OCI-LY7 (cell line): ENCODE measurements at regions of chr1 and their contacts with region 1.

Region 1: GRCh38 chr1:51000160-51000559 is 30.1 kb downstream of the CDKN2C start:
- DNase-seq: peak; percentile 85
- H3K4me3 ChIP-seq: peak overlapping the region; percentile 53
- H3K27ac ChIP-seq: peak overlapping the region; percentile 90
- H3K4me1 ChIP-seq: peaks cover 32% of the 10 kb centered on the region
- CTCF ChIP-seq: no peak

Region 2: GRCh38 chr1:50405814-50406213 is 594.3 kb before region 1 on chr1:
- CTCF ChIA-PET with region 1: no interaction called
- POLR2A ChIA-PET with region 1: no interaction called
- intact Hi-C with region 1: no loop called
- DNase-seq: no peak
- H3K4me3 ChIP-seq: no peak overlapping the region
- H3K27ac ChIP-seq: no peak overlapping the region
- H3K4me1 ChIP-seq: no peaks in the 10 kb centered on the region
- CTCF ChIP-seq: no peak

Region 3: DNA sequence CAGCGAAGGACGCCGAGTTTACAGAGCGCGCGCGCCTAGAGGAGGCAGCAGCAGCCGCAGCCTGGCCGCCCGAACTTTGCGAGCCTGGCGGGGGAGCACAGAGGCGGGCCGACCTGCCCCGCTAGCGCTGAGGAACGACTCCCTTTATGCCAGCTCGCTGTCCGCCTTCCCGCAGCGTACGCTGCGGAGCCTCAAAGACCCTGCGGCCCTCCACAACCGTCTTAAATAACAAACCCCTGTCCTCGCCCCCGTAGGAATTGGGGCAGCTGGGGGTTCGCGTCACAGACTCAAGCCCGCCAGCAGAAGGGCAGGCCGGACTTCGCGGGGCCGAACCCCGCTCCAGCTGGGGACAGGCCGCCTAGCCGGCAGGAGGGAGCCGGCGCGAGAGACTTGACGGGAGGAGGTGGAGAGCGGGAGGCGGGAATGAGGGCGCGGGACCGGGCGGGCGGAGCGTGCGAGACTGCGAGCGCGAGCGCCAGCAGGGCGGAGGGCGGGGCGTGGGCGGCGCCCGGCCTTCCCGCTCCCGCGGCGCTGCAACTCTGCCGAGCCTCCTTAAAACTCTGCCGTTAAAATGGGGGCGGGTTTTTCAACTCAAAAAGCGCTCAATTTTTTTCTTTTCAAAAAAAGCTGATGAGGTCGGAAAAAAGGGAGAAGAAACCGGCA is 31.9 kb before region 1 on chr1:
- CTCF ChIA-PET with region 1: no interaction called
- POLR2A ChIA-PET with region 1: interaction called, 16 read pairs
- intact Hi-C with region 1: no loop called
- DNase-seq: peak; percentile 91
- H3K4me3 ChIP-seq: peak overlapping the region; percentile 88
- H3K27ac ChIP-seq: peak overlapping the region; percentile 89
- H3K4me1 ChIP-seq: peaks cover 23% of the 10 kb centered on the region
- CTCF ChIP-seq: peak; percentile 65